ENCODE measurements at regions of chr4 and their contacts with region 1.

Region 1: DNA sequence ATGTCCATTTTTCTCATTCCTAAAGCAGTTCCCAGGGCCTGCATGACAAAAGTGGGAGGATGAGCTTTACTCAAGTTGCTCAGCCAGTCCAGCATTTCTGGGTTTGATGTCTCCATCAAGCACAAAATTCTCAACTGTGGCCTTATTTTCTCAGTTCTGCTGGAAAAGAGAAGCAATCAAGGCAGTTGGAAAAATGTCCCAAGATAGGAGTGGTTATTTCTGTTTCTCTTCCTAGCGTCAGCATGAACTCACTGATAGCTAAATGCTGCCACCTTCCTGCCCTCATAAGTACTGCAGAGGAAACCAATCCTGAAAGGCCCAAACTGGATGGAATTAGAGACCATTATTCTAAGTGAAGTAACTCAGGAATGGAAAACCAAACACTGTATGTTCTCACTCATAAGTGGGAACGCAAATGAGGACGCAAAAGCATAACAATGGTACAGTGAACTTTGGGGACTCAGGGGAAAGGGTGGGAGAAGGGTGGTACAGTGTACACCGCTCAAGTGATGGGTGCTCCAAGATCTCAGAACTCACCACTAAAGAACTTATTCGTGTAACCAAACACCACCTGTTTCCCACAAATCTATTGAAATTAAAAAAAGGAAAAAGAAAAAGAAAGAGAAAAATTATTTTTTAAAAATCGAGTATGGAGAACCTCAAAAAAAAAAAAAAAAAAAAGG is 29.6 kb downstream of the ADH7 start:
- DNase-seq: peak; percentile 16
- CTCF ChIP-seq: peak; percentile 90

Region 2: DNA sequence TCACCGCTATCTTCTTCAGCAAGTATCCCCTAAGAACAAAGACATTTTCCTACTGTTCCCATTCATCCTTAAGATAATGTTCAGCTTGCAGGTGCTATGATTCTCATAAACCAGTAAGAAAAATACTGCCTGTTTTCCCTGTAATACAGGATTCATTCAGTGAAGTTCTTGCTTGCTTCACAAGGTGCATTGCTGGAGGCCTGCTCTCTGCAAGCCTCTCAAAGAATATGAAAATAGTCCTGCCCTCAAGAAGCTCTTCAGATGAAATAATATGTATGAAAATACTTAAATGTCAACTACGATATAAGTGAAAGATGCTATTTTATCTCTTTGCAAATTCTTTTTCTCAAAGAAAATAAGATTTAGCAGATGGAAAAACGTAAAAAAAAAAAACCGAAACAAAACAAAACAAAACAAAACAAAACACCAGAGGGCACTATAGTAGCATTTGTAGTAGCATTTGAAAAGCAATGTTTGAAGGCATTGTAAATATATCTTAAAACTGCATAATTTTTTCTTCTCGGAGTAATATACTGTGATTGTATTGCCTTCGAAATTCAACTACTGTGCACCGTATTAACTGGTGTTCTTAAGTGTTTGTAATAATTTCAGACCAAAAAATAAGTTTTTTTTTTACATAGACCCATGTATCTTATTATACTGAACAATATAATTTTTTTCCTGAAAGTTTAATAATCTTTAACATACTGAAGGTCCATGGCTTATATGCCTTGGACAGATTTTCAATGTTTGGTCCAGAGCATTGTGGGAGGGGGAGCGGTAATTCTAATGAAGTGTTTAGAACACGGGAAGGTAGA is 287.5 kb before region 1 on chr4:
- CTCF ChIA-PET with region 1: interaction called, 12 read pairs
- POLR2A ChIA-PET with region 1: no interaction called
- DNase-seq: peak; percentile 36
- CTCF ChIP-seq: no peak

Region 3: GRCh38 chr4:99483636-99484035 is 78.1 kb after region 1 on chr4:
- CTCF ChIA-PET with region 1: no interaction called
- POLR2A ChIA-PET with region 1: no interaction called
- DNase-seq: no peak
- CTCF ChIP-seq: no peak